ENCODE measurements at regions of chr12 and their contacts with region 1.

Region 1: GRCh38 chr12:70733385-70733784 is 96.2 kb upstream of the PTPRB start:
- DNase-seq: peak; percentile 73
- H3K27ac ChIP-seq: no peak overlapping the region
- CTCF ChIP-seq: peak; percentile 71

Region 2: GRCh38 chr12:70798016-70798783 is 64.8 kb after region 1 on chr12:
- CTCF ChIA-PET with region 1: no interaction called
- POLR2A ChIA-PET with region 1: no interaction called
- DNase-seq: no peak
- H3K27ac ChIP-seq: no peak overlapping the region
- CTCF ChIP-seq: no peak

Region 3: GRCh38 chr12:70849265-70849960 is 116.0 kb after region 1 on chr12:
- CTCF ChIA-PET with region 1: interaction called, 15 read pairs
- POLR2A ChIA-PET with region 1: no interaction called
- DNase-seq: peak; percentile 28
- H3K27ac ChIP-seq: no peak overlapping the region
- CTCF ChIP-seq: 0 out of 2 replicates have a peak, but pooled peaks have one; percentile 7

Region 4: DNA sequence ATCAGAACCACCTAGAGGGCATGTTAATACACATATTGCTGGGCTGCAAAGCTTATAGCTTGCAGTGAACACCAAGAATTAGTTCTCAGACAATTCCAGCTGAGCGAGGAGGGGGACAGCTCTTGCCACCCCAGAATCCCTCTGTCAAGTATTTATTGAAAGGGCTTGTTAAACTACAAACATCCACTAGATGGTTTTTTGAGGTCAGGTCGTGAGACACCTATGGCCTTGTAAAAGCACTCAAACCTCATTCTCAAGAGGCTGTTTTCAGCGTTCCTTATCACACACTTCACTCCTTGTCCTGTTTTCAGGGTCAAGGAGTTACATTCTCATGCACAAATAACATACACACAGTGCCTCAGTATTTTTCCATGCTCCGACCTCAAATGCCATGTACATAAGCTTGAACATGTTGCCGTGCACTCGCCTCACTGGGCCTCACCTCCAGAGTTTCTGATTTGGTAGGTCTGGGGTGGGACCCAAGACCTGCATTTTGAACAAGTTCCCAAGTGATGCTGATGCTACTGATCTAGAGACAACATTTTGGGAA is 286.0 kb after region 1 on chr12:
- CTCF ChIA-PET with region 1: interaction called, 11 read pairs
- POLR2A ChIA-PET with region 1: no interaction called
- DNase-seq: no peak
- H3K27ac ChIP-seq: no peak overlapping the region
- CTCF ChIP-seq: no peak

Region 5: GRCh38 chr12:71551529-71551928 is 818.1 kb after region 1 on chr12:
- CTCF ChIA-PET with region 1: no interaction called
- POLR2A ChIA-PET with region 1: no interaction called
- DNase-seq: no peak
- H3K27ac ChIP-seq: no peak overlapping the region
- CTCF ChIP-seq: no peak

Region 6: DNA sequence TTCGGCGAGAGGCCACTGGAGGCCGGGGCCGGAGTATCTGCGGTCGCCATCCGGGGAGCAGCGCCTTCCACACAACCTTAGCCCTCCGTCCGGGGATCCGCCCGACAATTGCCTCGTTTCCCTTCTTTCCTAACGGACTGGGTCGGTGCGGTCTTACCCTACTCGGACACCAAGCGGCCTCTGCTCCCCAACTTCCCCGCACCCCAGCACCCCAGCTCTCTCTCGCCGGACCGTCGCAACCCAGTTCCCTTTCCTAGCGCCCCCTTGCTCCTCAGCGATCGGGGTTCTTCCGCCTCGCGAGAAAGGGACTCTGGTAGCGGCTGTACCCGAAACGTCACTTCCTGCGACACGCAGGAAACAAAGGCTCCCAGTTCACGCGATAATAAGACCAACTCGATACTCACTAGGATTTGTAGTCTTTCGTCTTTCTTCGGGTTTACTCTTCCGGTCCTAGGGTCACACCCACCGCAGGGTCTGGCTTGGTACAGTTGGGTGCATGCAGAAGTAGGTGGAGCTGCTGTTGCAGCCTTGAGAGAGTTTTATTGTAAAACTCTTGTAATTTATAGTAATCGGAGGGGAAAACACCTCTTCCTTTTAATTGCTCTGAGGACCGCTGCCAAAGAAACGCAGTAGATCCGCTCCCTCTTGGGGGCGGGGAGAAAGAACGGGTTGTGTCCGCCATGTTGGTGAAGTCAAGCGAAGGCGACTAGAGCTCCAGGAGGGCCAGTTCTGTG is 930.3 kb after region 1 on chr12 and contains the start of gene ZFC3H1:
- CTCF ChIA-PET with region 1: interaction called, 10 read pairs
- POLR2A ChIA-PET with region 1: no interaction called
- DNase-seq: peak; percentile 93
- H3K27ac ChIP-seq: peak within 1 kb of the TSS; percentile 97
- CTCF ChIP-seq: no peak; the same call in 1 of the 2 replicates

Measured in RWPE1 (cell line).